ENCODE measurements at regions of chr17 and their contacts with region 1.

Region 1: GRCh38 chr17:4215882-4216570 is 47.8 kb downstream of the ANKFY1 start:
- DNase-seq: no peak
- ATAC-seq: no peak
- H3K4me3 ChIP-seq: no peak overlapping the region
- H3K27ac ChIP-seq: no peak overlapping the region
- H3K4me1 ChIP-seq: no peaks in the 10 kb centered on the region
- H3K27me3 ChIP-seq: no peaks in the 10 kb centered on the region
- CTCF ChIP-seq: no peak
- POLR2A ChIP-seq: no peak
- RAD21 ChIP-seq: no peak

Region 2: DNA sequence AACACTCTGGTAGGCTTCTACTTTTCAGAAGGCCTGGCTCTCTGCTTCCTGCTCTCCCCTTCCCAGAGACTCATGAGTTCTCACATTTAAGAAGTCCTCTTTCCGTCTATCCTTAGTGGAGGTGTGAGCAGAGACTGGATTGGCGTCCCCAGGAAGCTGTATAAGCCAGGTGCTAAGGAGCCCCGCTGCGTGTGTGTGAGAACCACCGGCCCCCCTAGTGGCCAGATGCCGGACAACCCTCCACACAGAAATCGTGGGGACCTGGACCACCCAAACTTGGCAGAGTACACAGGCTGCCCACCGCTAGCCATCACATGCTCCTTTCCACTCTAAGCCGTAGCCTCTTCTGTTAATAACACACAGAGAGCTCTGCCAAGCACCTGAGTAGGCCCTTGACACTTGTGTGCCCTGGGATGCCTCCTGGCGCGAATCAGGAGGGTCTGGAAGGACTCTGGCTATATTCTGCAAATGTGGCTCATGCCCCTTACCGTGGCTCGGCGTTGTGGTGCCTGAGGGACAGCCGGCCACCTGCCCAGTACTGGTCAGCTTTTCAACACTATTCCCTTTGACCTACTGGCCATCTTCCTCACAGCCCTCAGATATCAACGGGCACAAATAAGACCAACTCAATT is 59.2 kb before region 1 on chr17:
- CTCF ChIA-PET with region 1: no interaction called
- POLR2A ChIA-PET with region 1: no interaction called
- RAD21 ChIA-PET with region 1: no interaction called
- intact Hi-C with region 1: no loop called
- DNase-seq: no peak
- ATAC-seq: no peak
- H3K4me3 ChIP-seq: no peak overlapping the region
- H3K27ac ChIP-seq: no peak overlapping the region
- H3K4me1 ChIP-seq: peaks cover 7 to 12% of the 10 kb centered on the region in 2 experiments; a peak in 3 of 4 replicates
- H3K27me3 ChIP-seq: no peaks in the 10 kb centered on the region
- CTCF ChIP-seq: peak in 2 of 3 experiments; percentile 24 to 37; a peak in 3 of 6 replicates
- POLR2A ChIP-seq: no peak
- RAD21 ChIP-seq: no peak

Region 3: GRCh38 chr17:4199818-4200402 is 16.1 kb before region 1 on chr17:
- CTCF ChIA-PET with region 1: interaction called, 29 read pairs
- POLR2A ChIA-PET with region 1: no interaction called
- RAD21 ChIA-PET with region 1: interaction called in 1 of 2 experiments, 4 read pairs
- intact Hi-C with region 1: no loop called
- DNase-seq: peak; percentile 18
- ATAC-seq: peak; percentile 60; the same call in 1 of the 2 replicates
- H3K4me3 ChIP-seq: no peak overlapping the region
- H3K27ac ChIP-seq: no peak overlapping the region
- H3K4me1 ChIP-seq: no peaks in the 10 kb centered on the region
- H3K27me3 ChIP-seq: no peaks in the 10 kb centered on the region
- CTCF ChIP-seq: peak; percentile 56 to 82 (median 74); a peak in 5 of 6 replicates
- POLR2A ChIP-seq: no peak
- RAD21 ChIP-seq: peak; percentile 46

Region 4: GRCh38 chr17:4249452-4250029 is 33.5 kb after region 1 on chr17:
- CTCF ChIA-PET with region 1: interaction called, 31 read pairs
- POLR2A ChIA-PET with region 1: no interaction called
- RAD21 ChIA-PET with region 1: no interaction called
- intact Hi-C with region 1: loop called (anchors 1 kb)
- DNase-seq: no peak
- ATAC-seq: peak; percentile 61
- H3K4me3 ChIP-seq: no peak overlapping the region
- H3K27ac ChIP-seq: no peak overlapping the region
- H3K4me1 ChIP-seq: peaks cover 20 to 27% of the 10 kb centered on the region in 2 experiments
- H3K27me3 ChIP-seq: no peaks in the 10 kb centered on the region
- CTCF ChIP-seq: peak in 2 of 3 experiments; percentile 54 to 68; a peak in 4 of 6 replicates
- POLR2A ChIP-seq: no peak
- RAD21 ChIP-seq: no peak; the same call in 1 of the 2 replicates

Region 5: GRCh38 chr17:4366327-4367063 is 150.5 kb after region 1 on chr17 and contains the start of gene UBE2G1:
- CTCF ChIA-PET with region 1: no interaction called
- POLR2A ChIA-PET with region 1: no interaction called
- RAD21 ChIA-PET with region 1: no interaction called
- intact Hi-C with region 1: loop called (anchors 1 kb)
- DNase-seq: peak; percentile 93
- ATAC-seq: peak; percentile 84
- H3K4me3 ChIP-seq: peak within 1 kb of the TSS; percentile 67 to 89
- H3K27ac ChIP-seq: peak within 1 kb of the TSS; percentile 95
- H3K4me1 ChIP-seq: peaks cover 11 to 15% of the 10 kb centered on the region in 2 experiments; a peak in 3 of 4 replicates
- H3K27me3 ChIP-seq: no peaks in the 10 kb centered on the region
- CTCF ChIP-seq: peak; percentile 20 to 52 (median 38); a peak in 3 of 6 replicates
- POLR2A ChIP-seq: peak; percentile 49
- RAD21 ChIP-seq: peak; percentile 78
- total RNA-seq, gene UBE2G1: 80.6 TPM

Region 6: DNA sequence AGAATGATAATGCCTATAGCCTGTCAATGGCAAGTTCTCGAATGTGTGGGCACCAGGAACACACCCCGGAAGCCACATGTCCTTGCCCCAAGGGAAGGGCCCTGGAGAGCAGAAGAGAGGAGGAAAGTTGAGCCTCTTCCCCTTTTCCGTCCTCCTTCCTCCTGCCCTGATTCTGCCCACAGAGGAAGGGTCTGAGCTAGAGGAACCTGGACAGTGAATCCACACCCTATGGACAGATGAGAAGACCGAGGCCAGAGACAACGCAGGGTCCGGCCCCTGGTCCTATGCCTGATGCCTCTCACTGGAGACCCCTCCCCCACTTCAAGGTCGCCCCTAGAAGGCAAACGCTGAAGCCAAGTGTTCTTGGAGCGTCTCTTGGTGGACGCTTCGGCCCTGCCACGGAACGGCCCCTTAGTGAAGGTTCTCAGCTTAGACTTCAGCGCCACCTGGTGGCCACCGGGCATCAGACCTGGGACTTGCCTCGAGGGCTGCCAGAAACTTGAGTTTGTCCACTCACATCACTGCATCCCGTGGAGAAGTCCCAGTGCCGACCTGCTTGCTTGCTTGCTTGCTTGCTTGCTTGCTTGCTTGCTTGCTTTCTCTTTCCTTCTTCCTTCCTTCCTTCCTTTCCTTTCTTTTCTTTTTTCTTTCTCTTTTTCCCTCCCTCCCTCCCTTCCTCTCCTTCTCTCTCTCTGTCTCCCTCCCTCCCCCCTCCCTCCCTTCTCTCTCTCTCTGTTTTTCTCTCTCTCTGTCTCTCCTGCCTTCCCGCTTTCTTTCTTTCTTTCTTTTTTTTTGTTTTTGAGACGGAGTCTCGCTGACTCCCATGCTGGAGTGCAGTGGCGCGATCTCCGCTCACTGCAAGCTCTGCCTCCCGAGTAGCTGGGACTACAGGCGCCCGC is 197.2 kb after region 1 on chr17:
- CTCF ChIA-PET with region 1: interaction called, 43 read pairs
- POLR2A ChIA-PET with region 1: no interaction called
- RAD21 ChIA-PET with region 1: interaction called, 4 to 13 read pairs
- intact Hi-C with region 1: loop called (anchors 1 kb)
- DNase-seq: peak; percentile 75
- ATAC-seq: peak; percentile 100
- H3K4me3 ChIP-seq: no peak overlapping the region
- H3K27ac ChIP-seq: no peak overlapping the region
- H3K4me1 ChIP-seq: peaks cover 0 to 4% of the 10 kb centered on the region in 2 experiments; a peak in 2 of 4 replicates
- H3K27me3 ChIP-seq: no peaks in the 10 kb centered on the region
- CTCF ChIP-seq: peak; percentile 85 to 98 (median 90)
- POLR2A ChIP-seq: no peak
- RAD21 ChIP-seq: peak; percentile 99

Region 7: GRCh38 chr17:5667871-5668270 is 1451.8 kb after region 1 on chr17:
- CTCF ChIA-PET with region 1: no interaction called
- POLR2A ChIA-PET with region 1: no interaction called
- RAD21 ChIA-PET with region 1: no interaction called
- intact Hi-C with region 1: no loop called
- DNase-seq: peak; percentile 19
- ATAC-seq: peak; percentile 90
- H3K4me3 ChIP-seq: no peak overlapping the region
- H3K27ac ChIP-seq: no peak overlapping the region
- H3K4me1 ChIP-seq: no peaks in the 10 kb centered on the region
- H3K27me3 ChIP-seq: peaks cover 63% of the 10 kb centered on the region
- CTCF ChIP-seq: peak; percentile 15 to 56 (median 55); a peak in 5 of 6 replicates
- POLR2A ChIP-seq: no peak
- RAD21 ChIP-seq: peak; percentile 34

Measured in HCT116 (cell line).